ENCODE measurements at regions of chr17 and their contacts with region 1.

Region 1: GRCh38 chr17:69581061-69581961 is 166.8 kb downstream of the MAP2K6 start:
- DNase-seq: no peak
- H3K4me3 ChIP-seq: no peak overlapping the region
- H3K27ac ChIP-seq: no peak overlapping the region
- H3K27me3 ChIP-seq: no peaks in the 10 kb centered on the region
- CTCF ChIP-seq: no peak

Region 2: DNA sequence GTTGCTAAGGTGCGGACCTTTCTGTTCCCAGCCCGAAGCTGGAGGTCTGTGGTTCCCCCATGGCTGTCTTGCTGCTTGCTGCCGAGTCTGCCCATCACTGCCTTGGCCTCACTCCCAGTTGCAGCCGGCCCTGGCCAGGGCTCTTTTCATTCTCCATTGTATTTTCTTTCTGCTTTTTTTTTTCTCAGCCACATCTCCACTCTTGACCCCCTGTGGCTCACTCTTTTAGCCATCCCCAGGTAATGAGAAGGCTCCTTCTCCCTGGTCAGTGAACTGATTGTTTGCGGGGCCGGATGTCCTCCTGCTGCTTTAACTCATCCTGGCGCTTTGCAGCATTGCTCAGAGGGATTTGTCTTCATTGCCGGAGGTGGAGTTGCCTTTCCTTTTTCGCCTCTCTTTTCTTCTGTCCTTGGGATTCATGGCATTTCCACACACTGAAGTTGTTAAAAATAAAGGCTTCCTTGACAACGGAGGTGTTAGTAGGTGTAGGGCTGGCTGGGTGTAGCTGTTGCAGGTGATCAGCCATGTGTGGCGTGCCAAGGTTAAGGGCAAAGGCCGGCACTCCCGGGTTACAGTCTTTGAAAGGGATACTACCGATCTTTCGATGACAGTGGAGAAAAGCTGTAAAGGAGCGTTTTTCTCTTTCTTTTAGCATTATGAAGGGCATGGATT is 132.7 kb before region 1 on chr17:
- CTCF ChIA-PET with region 1: no interaction called
- POLR2A ChIA-PET with region 1: no interaction called
- DNase-seq: no peak
- H3K4me3 ChIP-seq: no peak overlapping the region
- H3K27ac ChIP-seq: no peak overlapping the region
- H3K27me3 ChIP-seq: no peaks in the 10 kb centered on the region
- CTCF ChIP-seq: no peak

Region 3: DNA sequence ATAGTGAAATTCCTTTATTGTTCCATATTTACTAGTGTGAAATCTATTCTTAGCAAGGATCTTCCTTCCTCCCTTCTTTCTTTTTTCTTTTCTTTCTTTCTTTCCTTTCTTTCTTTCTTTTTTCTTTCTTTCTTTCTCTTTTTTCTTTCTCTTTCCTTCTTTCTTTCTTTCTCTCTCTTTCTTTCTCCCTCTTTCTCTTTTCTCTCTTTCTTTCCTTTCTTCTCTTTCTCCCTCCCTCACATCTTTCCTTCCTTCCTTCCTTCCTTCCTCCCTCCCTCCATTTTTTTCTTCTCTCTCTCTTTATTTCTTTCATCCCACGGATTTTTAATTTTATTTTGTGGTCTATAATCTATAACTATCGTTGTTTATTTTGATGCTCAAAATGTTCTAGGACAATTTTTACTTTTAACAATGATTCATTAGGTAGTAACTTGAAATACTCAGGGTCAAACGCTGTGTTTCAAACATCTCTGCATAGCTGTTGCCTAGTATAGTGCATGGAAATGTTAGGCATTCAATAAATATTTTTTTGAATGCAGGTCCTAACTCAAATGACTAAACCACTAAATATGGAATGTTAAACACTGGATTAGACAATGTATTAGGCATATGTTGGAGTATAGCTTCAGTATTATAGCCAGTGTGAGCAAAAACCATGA is 11.5 kb after region 1 on chr17:
- CTCF ChIA-PET with region 1: no interaction called
- POLR2A ChIA-PET with region 1: interaction called, 12 read pairs
- DNase-seq: peak; percentile 65
- H3K4me3 ChIP-seq: no peak overlapping the region
- H3K27ac ChIP-seq: no peak overlapping the region
- H3K27me3 ChIP-seq: no peaks in the 10 kb centered on the region
- CTCF ChIP-seq: no peak